Endothelial cell of umbilical vein (primary cell): ENCODE measurements at regions of chr6 and their contacts with region 1.

Region 1: DNA sequence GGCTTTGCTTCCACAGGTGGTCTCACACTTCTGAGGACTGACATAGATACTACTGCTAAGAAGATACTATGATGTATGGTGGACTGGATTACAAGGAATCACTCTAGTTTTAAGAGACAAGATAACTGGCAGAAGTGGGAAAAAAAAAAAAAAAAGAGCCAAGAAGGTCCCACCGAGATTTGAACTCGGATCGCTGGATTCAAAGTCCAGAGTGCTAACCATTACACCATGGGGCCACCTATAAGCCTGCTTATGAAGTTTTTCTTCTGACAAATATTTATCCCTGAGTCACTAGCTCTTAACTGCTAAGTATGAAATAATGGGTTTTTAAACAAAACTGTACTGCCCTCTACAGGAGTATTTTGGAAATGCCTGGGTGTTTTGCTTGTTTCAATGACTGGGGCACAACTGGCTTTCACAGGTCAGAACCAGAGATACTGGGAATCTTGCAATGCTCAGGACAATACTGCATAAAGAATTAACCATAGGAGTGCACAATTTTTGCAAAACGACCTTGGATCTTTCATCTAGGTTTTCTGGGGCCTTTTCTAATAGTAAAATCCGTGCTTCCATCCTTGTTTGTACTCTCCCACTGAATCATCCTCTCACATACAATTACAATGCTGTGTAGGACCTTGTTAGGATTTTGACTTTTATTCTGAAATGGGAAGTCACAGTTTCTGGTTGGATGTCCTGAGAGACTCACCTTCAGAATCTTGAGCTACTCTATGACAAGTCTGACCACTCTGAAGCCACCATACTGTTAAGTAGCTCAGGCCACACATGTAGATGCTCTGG is 116.3 kb downstream of the OR2B2 start:
- DNase-seq: peak; percentile 95
- H3K4me3 ChIP-seq: no peak overlapping the region
- H3K27ac ChIP-seq: no peak overlapping the region
- H3K4me1 ChIP-seq: peaks cover 7% of the 10 kb centered on the region
- H3K27me3 ChIP-seq: no peaks in the 10 kb centered on the region
- CTCF ChIP-seq: peak; percentile 60 to 69
- POLR2A ChIP-seq: no peak

Region 2: GRCh38 chr6:27157459-27158315 is 638.2 kb before region 1 on chr6:
- CTCF ChIA-PET with region 1: interaction called, 31 read pairs
- POLR2A ChIA-PET with region 1: no interaction called
- dilution Hi-C with region 1: no loop called
- intact Hi-C with region 1: no loop called
- DNase-seq: peak; percentile 57
- H3K4me3 ChIP-seq: peak overlapping the region; percentile 30 to 64 (median 59)
- H3K27ac ChIP-seq: no peak overlapping the region
- H3K4me1 ChIP-seq: peaks cover 10% of the 10 kb centered on the region
- H3K27me3 ChIP-seq: peaks cover 8 to 11% of the 10 kb centered on the region in 2 experiments
- CTCF ChIP-seq: peak; percentile 42 to 63
- POLR2A ChIP-seq: no peak

Region 3: GRCh38 chr6:27188885-27189418 is 606.9 kb before region 1 on chr6:
- CTCF ChIA-PET with region 1: interaction called, 10 read pairs
- POLR2A ChIA-PET with region 1: no interaction called
- dilution Hi-C with region 1: no loop called
- intact Hi-C with region 1: no loop called
- DNase-seq: peak; percentile 83
- H3K4me3 ChIP-seq: peak overlapping the region; percentile 59 to 80 (median 66)
- H3K27ac ChIP-seq: peak overlapping the region; percentile 37
- H3K4me1 ChIP-seq: no peaks in the 10 kb centered on the region
- H3K27me3 ChIP-seq: peaks cover 0 to 4% of the 10 kb centered on the region in 2 experiments
- CTCF ChIP-seq: peak; percentile 54 to 55
- POLR2A ChIP-seq: no peak

Region 4: DNA sequence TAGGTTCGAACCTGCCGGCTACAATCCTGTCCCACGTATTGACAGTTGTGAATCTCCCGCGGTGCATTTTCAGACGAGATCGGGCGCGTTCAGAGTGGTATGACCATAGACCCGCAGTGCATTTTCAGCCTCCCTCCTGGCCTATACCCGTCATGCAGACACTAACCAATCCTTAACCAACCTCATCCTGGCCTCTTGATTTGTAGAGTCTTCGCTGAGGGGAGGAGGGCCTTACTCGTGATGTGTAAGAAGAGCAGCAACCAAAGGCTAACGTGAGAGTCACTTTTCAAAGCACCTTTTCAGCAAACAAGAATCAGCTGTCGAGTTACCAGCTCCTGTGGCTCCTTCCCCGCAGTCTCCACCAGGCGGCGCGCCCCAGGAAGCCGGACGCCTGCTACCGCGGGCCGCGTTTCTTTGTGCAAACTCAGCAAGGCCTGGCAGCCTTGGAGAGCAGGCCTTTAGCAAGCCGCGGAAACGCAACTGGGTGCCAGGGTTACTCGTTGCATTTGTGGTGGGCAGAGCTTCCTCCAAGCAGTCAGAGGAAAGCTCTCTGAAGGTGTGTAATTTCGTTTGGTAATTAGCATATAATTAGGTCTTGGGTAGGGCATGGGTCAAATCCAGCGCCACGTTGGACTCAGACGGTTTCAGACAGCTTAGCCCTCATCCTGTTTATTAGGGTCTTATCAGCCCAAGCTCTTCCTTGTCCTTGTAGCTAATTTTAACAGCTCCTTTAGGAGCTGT is 23.5 kb before region 1 on chr6:
- CTCF ChIA-PET with region 1: interaction called, 132 read pairs
- POLR2A ChIA-PET with region 1: interaction called, 3 read pairs
- dilution Hi-C with region 1: no loop called
- intact Hi-C with region 1: loop called (anchors 1 kb)
- DNase-seq: peak; percentile 77
- H3K4me3 ChIP-seq: no peak overlapping the region
- H3K27ac ChIP-seq: no peak overlapping the region
- H3K4me1 ChIP-seq: peaks cover 2% of the 10 kb centered on the region
- H3K27me3 ChIP-seq: peaks cover 16 to 20% of the 10 kb centered on the region in 2 experiments
- CTCF ChIP-seq: peak; percentile 92 to 99
- POLR2A ChIP-seq: no peak

Region 5: GRCh38 chr6:27777614-27778355 is 18.1 kb before region 1 on chr6:
- CTCF ChIA-PET with region 1: interaction called, 132 read pairs
- POLR2A ChIA-PET with region 1: interaction called, 3 read pairs
- dilution Hi-C with region 1: no loop called
- intact Hi-C with region 1: loop called (anchors 1 kb)
- DNase-seq: no peak
- H3K4me3 ChIP-seq: no peak overlapping the region
- H3K27ac ChIP-seq: no peak overlapping the region
- H3K4me1 ChIP-seq: no peaks in the 10 kb centered on the region
- H3K27me3 ChIP-seq: peaks cover 8 to 11% of the 10 kb centered on the region in 2 experiments
- CTCF ChIP-seq: no peak
- POLR2A ChIP-seq: no peak

Region 6: GRCh38 chr6:27785294-27785693 is 10.6 kb before region 1 on chr6:
- CTCF ChIA-PET with region 1: interaction called, 14 read pairs
- POLR2A ChIA-PET with region 1: no interaction called
- dilution Hi-C with region 1: no loop called
- intact Hi-C with region 1: no loop called
- DNase-seq: no peak
- H3K4me3 ChIP-seq: no peak overlapping the region
- H3K27ac ChIP-seq: no peak overlapping the region
- H3K4me1 ChIP-seq: no peaks in the 10 kb centered on the region
- H3K27me3 ChIP-seq: peaks cover 18 to 19% of the 10 kb centered on the region in 2 experiments
- CTCF ChIP-seq: no peak
- POLR2A ChIP-seq: no peak

Region 7: DNA sequence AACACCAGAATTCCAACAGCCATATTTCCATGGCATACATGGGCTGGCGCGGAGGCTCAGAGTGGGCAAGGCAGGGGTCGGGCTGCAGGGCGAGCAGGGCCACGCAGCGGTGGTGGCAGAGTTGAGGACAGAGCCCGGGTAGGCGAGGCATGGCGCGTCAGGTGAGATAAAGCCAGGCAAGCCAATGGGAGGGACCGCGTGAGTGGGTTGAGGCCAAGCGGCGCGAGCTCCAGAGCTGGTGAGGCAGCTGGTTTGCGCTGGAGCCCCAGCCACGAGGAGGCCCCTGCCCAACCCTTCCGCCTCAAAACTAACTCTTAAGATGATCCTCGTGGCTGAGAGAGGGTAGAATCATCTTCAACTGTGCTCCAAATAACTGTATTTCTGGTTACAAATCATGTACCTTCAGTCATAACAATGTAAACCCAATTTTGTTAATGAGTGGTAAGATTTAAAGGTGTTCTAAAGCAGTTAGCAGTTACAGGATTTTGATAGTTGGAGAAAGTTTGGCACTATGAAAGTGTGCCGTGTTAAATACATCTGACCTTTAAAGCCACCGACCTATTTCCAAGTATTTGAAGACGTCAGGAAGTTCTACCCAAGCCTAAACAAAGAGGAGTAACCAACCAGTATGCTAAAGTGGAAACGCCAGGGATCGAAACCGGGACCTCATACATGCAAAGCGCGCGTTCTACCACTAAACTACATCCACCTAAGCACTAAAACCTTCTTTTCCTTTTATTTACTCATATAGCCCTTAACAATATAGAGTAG is 837.7 kb after region 1 on chr6:
- CTCF ChIA-PET with region 1: no interaction called
- POLR2A ChIA-PET with region 1: no interaction called
- dilution Hi-C with region 1: no loop called
- intact Hi-C with region 1: no loop called
- DNase-seq: no peak
- H3K4me3 ChIP-seq: no peak overlapping the region
- H3K27ac ChIP-seq: no peak overlapping the region
- H3K4me1 ChIP-seq: no peaks in the 10 kb centered on the region
- H3K27me3 ChIP-seq: peaks cover 29 to 35% of the 10 kb centered on the region in 2 experiments
- CTCF ChIP-seq: no peak
- POLR2A ChIP-seq: no peak